Sigmoid colon (tissue), 7 donors: ENCODE measurements at regions of chr5 and their contacts with region 1.

Region 1: DNA sequence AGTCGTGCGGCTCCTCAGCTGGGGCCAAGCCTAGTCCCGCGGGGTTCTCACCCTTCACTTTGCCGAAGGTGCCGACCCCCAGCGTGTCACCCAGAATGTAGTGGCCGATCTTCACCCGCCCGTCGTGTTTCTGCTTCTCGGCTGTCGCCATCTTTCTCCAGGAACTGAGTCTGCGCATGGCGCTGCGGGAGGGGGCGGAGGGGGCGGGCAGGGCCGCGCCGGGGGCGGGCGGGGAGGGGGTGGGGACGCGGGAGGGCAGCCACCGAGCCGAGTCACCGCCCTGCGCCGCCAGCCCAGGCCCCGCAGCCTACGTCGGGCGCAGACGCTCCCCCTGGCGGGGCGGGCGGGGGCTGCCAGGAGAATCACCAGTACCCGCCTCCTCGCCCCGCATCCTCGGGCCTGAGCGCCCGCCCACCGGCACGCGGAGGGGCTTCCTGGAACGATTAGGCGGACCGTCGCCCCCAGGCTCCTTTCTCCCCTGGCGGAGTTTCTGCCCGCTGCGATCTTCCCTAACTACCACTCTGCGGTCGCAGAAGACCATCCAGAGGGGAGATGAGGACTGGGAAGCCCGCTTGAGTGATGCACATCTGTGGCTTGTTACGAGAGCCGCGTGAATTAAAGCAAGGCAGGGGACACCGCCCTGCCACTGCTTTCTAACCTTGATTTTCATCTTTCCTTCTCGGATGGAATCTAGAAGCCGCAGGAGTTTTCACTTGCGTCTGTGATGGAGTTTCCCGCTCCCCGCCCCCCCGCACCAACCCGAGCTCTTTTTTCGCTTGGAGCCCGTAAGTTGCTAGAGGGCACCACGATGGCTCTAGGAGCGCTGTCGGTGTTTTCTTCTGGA is at the start of gene PRKAA1:
- DNase-seq: peak; percentile 95
- H3K4me3 ChIP-seq: peak within 1 kb of the TSS; percentile 97 to 100 (median 99)
- H3K27ac ChIP-seq: peak within 1 kb of the TSS; percentile 95 to 99 (median 98)
- H3K4me1 ChIP-seq: peaks cover 0 to 32% (median 22%) of the 10 kb centered on the region in 4 donors
- H3K27me3 ChIP-seq: no peaks in the 10 kb centered on the region
- CTCF ChIP-seq: peak in 3 of 4 experiments; percentile 32 to 73 (median 33)
- EP300 ChIP-seq: no peak
- POLR2A ChIP-seq: peak; percentile 30 to 56
- total RNA-seq, gene PRKAA1: 63.4 to 98.4 (median 86.7) TPM

Region 2: GRCh38 chr5:40736103-40736875 is 61.9 kb before region 1 on chr5:
- intact Hi-C with region 1: no loop called
- DNase-seq: no peak
- H3K4me3 ChIP-seq: no peak overlapping the region
- H3K27ac ChIP-seq: no peak overlapping the region
- H3K4me1 ChIP-seq: peaks cover 0 to 30% (median 26%) of the 10 kb centered on the region in 4 donors
- H3K27me3 ChIP-seq: no peaks in the 10 kb centered on the region
- CTCF ChIP-seq: peak; percentile 44 to 71 (median 56)
- EP300 ChIP-seq: no peak
- POLR2A ChIP-seq: no peak

Region 3: DNA sequence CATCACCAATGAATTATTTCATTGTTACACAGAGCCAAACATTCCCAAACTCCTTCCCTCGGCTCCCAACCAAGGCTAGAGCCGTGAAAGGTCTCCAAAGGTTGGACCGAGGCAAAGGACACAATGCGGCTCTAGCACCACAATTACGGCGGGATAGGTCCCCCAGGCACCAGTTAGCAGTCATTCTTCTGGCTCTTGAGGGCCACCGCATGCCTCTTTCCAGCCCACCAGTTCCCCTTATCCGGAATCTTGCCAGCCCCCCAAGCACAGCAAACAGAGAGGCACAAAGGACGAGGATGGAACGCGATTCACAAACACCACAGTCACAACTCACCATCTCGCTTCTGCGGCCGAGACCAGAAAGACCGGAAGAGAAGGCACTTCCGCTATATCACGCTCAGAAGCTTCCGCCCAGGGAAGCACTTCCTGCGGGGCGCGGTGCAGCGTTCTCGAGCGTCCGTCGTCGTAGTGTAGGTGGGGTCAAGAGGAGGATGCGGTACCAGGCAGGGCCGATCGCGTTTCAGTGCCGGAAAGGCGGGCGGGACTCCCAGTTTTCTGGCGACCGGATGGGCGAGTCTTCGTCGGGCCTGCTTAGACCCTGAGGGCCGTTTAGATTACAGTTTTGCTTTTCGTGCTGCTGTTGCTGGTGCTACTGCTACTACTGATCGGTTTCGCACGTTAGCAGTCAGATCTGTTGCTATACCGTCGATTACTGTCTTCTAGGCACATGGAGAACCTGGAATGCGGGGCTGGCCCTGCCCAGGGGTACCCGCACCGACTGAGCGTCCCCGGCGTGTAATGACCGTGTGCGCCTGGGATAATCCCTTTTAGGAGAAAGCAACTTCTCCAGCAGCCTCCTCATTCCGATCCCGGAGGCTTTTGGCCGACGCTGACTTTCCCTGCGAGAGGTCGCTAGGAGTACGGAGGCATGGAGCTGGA is 36.9 kb after region 1 on chr5 and contains the start of gene RPL37:
- intact Hi-C with region 1: loop called (anchors 1 kb)
- DNase-seq: peak; percentile 98
- H3K4me3 ChIP-seq: peak within 1 kb of the TSS; percentile 50 to 75 (median 58)
- H3K27ac ChIP-seq: peak within 1 kb of the TSS; percentile 88 to 97 (median 95)
- H3K4me1 ChIP-seq: peaks cover 0 to 34% (median 16%) of the 10 kb centered on the region in 4 donors
- H3K27me3 ChIP-seq: no peaks in the 10 kb centered on the region
- CTCF ChIP-seq: no peak
- EP300 ChIP-seq: peak in 1 of 4 donors; percentile 25
- POLR2A ChIP-seq: peak; percentile 78 to 82
- total RNA-seq, gene RPL37: 120 to 170 (median 149) TPM

Region 4: GRCh38 chr5:40846371-40846770 is 48.1 kb after region 1 on chr5:
- intact Hi-C with region 1: no loop called
- DNase-seq: no peak
- H3K4me3 ChIP-seq: no peak overlapping the region
- H3K27ac ChIP-seq: no peak overlapping the region
- H3K4me1 ChIP-seq: no peaks in the 10 kb centered on the region
- H3K27me3 ChIP-seq: no peaks in the 10 kb centered on the region
- CTCF ChIP-seq: no peak
- EP300 ChIP-seq: no peak
- POLR2A ChIP-seq: no peak

Region 5: GRCh38 chr5:41156739-41157138 is 358.5 kb after region 1 on chr5:
- intact Hi-C with region 1: no loop called
- DNase-seq: no peak
- H3K4me3 ChIP-seq: no peak overlapping the region
- H3K27ac ChIP-seq: no peak overlapping the region
- H3K4me1 ChIP-seq: no peaks in the 10 kb centered on the region
- H3K27me3 ChIP-seq: no peaks in the 10 kb centered on the region
- CTCF ChIP-seq: no peak
- EP300 ChIP-seq: no peak
- POLR2A ChIP-seq: no peak